Astrocyte of the cerebellum (primary cell): ENCODE measurements at regions of chr9 and their contacts with region 1.

Region 1: GRCh38 chr9:37511016-37512010 is 25.6 kb downstream of the POLR1E start:
- DNase-seq: no peak
- H3K4me3 ChIP-seq: no peak overlapping the region
- CTCF ChIP-seq: peak; percentile 29

Region 2: DNA sequence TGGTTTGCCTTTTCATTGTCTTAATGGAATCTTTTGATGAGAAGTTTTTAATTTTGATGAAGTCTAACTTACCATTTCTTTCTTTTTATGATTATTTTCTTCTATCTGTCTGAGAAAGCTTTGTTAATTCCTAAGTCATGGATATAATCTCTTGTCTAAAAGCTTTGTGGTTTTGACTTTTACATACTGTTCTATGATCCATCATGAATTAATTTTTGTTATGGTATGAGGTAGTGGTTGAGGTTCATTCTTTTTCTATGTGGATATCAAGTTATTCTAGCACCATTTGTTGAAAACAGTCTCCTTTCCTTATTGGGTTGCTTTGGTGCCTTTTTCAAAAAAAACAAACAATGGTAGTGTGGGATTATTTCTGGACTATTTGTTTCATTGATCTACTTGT is 44.5 kb after region 1 on chr9:
- in situ Hi-C with region 1: loop called (anchors 5 kb)
- DNase-seq: peak; percentile 53
- H3K4me3 ChIP-seq: no peak overlapping the region
- CTCF ChIP-seq: no peak